HCT116 (cell line): ENCODE measurements at regions of chr2 and their contacts with region 1.

Region 1: DNA sequence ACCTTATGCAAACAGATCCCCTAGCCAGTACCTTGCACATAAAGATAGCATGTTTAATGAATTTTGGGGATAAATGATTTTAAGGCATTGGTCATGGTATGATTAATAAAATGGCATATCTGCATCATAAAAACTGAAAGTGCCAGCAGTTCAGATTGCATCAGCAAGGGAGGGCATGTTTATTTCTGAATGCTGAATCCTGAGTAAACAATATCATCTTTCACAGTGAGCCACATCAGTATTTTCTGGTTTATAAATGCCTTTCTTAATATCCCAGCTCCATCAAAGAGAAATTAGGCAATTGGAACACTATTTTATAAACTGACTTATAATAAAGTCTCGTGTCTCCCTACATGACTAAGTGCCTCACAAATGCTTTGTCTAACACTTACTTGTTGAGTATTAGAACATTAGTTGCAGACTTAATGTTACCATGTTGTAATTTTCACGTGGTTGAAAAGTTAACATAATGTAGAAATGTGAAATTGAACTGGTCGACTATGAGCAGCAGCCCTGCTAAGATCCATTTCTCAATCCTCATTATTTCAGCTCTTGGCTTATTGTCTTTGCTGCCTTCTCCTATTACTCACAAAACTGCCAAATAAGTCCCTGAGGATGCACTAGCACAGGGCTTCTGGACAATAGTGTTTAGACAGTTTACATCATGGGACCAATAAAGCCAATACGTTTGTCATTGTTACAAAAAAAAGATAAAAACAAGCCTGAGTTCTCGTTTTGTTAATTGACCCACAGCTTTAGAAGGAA is 48.0 kb downstream of the LANCL1 start:
- DNase-seq: no peak
- ATAC-seq: no peak
- H3K4me3 ChIP-seq: no peak overlapping the region
- H3K27ac ChIP-seq: no peak overlapping the region
- H3K4me1 ChIP-seq: no peaks in the 10 kb centered on the region
- H3K27me3 ChIP-seq: no peaks in the 10 kb centered on the region
- CTCF ChIP-seq: no peak
- POLR2A ChIP-seq: no peak
- RAD21 ChIP-seq: no peak

Region 2: GRCh38 chr2:209834767-209835166 is 593.8 kb before region 1 on chr2:
- CTCF ChIA-PET with region 1: no interaction called
- POLR2A ChIA-PET with region 1: no interaction called
- RAD21 ChIA-PET with region 1: no interaction called
- intact Hi-C with region 1: no loop called
- DNase-seq: no peak
- ATAC-seq: no peak
- H3K4me3 ChIP-seq: no peak overlapping the region
- H3K27ac ChIP-seq: no peak overlapping the region
- H3K4me1 ChIP-seq: no peaks in the 10 kb centered on the region
- H3K27me3 ChIP-seq: no peaks in the 10 kb centered on the region
- CTCF ChIP-seq: no peak
- POLR2A ChIP-seq: no peak
- RAD21 ChIP-seq: no peak

Region 3: GRCh38 chr2:210199186-210199765 is 229.3 kb before region 1 on chr2:
- CTCF ChIA-PET with region 1: no interaction called
- POLR2A ChIA-PET with region 1: no interaction called
- RAD21 ChIA-PET with region 1: no interaction called
- intact Hi-C with region 1: no loop called
- DNase-seq: peak; percentile 12
- ATAC-seq: peak; percentile 61
- H3K4me3 ChIP-seq: no peak overlapping the region
- H3K27ac ChIP-seq: no peak overlapping the region
- H3K4me1 ChIP-seq: peaks cover 0 to 5% of the 10 kb centered on the region in 2 experiments; a peak in 1 of 4 replicates
- H3K27me3 ChIP-seq: no peaks in the 10 kb centered on the region
- CTCF ChIP-seq: peak; percentile 54 to 65 (median 60); a peak in 5 of 6 replicates
- POLR2A ChIP-seq: no peak
- RAD21 ChIP-seq: peak; percentile 73

Region 4: DNA sequence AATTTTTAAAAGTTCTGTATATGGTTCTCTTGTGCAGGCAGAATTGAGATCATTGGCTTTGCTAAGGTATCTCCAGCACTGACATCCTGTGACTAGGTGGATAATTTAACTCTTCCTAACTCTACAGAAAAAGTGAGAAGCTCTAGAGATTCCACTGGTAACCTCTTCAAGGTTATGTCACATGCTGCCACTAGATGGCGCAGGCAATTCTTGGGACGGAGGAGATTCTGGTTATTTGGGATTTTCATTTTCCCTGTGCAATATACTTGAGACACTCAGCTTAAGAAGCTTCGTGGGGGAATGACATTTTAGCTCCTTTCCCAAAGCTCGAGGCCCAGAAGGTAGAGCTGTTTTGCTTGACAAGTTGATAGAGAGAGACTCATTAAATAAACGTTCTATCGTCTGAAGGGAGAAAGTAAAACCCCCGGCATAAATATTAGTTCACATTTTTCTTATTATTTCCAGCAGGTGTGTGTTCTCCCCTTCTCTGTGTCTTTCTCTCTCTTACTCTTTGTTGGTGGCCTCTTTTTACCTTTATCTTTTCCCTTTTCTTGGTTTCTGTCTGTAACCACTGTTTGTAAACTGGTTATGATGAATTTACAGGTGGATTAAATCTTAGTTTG is 74.5 kb after region 1 on chr2:
- CTCF ChIA-PET with region 1: no interaction called
- POLR2A ChIA-PET with region 1: no interaction called
- RAD21 ChIA-PET with region 1: no interaction called
- intact Hi-C with region 1: loop called (anchors 2 kb)
- DNase-seq: peak; percentile 13
- ATAC-seq: peak; percentile 83
- H3K4me3 ChIP-seq: no peak overlapping the region
- H3K27ac ChIP-seq: no peak overlapping the region
- H3K4me1 ChIP-seq: no peaks in the 10 kb centered on the region
- H3K27me3 ChIP-seq: no peaks in the 10 kb centered on the region
- CTCF ChIP-seq: peak; percentile 45 to 95 (median 89); a peak in 5 of 6 replicates
- POLR2A ChIP-seq: no peak
- RAD21 ChIP-seq: peak; percentile 32; the same call in 1 of the 2 replicates

Region 5: GRCh38 chr2:210768329-210768910 is 339.8 kb after region 1 on chr2:
- CTCF ChIA-PET with region 1: no interaction called
- POLR2A ChIA-PET with region 1: no interaction called
- RAD21 ChIA-PET with region 1: no interaction called
- intact Hi-C with region 1: no loop called
- DNase-seq: no peak
- ATAC-seq: no peak
- H3K4me3 ChIP-seq: no peak overlapping the region
- H3K27ac ChIP-seq: no peak overlapping the region
- H3K4me1 ChIP-seq: no peaks in the 10 kb centered on the region
- H3K27me3 ChIP-seq: no peaks in the 10 kb centered on the region
- CTCF ChIP-seq: no peak
- POLR2A ChIP-seq: no peak
- RAD21 ChIP-seq: no peak